Astrocyte of the cerebellum (primary cell): ENCODE measurements at regions of chr17 and their contacts with region 1.

Region 1: GRCh38 chr17:63542942-63543821 is 7.1 kb upstream of the DCAF7 start:
- DNase-seq: no peak
- H3K4me3 ChIP-seq: no peak overlapping the region
- CTCF ChIP-seq: no peak

Region 2: DNA sequence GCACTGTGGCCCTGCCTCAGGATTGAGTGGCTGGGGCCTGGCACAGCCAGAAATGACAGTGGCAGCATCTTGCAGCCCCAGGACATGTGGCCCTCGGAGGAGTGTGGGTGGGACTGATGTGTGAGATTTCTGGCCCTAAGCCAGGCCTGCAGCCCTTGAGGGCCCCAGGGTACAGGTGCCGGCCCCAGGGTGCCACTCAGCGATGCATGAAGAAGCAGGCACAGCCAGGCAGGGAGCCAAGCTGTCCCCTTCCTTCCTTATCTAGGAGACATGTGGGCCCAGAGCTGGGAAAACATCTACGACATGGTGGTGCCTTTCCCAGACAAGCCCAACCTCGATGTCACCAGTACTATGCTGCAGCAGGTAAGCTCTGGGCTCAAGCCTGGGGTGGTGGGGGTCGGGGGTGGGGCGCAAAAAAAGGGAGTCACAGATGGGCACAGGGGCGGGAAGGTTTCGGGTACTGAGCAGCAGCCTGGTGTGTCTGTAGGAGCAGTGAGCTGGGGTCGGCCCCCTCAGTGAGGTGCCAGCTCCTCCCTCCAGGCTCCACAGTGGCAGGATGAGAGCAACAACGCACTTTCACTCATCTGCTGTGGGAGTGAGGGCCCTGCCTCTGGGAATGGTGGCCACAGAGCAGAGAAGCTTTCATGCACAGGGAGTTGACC is 62.2 kb before region 1 on chr17:
- in situ Hi-C with region 1: loop called (anchors 5 kb)
- DNase-seq: no peak
- H3K4me3 ChIP-seq: no peak overlapping the region
- CTCF ChIP-seq: no peak

Region 3: GRCh38 chr17:63611354-63611753 is 68.2 kb after region 1 on chr17:
- in situ Hi-C with region 1: no loop called
- DNase-seq: no peak
- H3K4me3 ChIP-seq: no peak overlapping the region
- CTCF ChIP-seq: no peak

Region 4: GRCh38 chr17:63665527-63666214 is 122.5 kb after region 1 on chr17:
- in situ Hi-C with region 1: no loop called
- DNase-seq: no peak
- H3K4me3 ChIP-seq: no peak overlapping the region
- CTCF ChIP-seq: no peak

Region 5: GRCh38 chr17:63773381-63774140 is 230.4 kb after region 1 on chr17 and contains the start of gene CCDC47:
- in situ Hi-C with region 1: no loop called
- DNase-seq: peak; percentile 99
- H3K4me3 ChIP-seq: peak within 1 kb of the TSS; percentile 82
- CTCF ChIP-seq: no peak